H1 (cell line): ENCODE measurements at regions of chr1 and their contacts with region 1.

Region 1: DNA sequence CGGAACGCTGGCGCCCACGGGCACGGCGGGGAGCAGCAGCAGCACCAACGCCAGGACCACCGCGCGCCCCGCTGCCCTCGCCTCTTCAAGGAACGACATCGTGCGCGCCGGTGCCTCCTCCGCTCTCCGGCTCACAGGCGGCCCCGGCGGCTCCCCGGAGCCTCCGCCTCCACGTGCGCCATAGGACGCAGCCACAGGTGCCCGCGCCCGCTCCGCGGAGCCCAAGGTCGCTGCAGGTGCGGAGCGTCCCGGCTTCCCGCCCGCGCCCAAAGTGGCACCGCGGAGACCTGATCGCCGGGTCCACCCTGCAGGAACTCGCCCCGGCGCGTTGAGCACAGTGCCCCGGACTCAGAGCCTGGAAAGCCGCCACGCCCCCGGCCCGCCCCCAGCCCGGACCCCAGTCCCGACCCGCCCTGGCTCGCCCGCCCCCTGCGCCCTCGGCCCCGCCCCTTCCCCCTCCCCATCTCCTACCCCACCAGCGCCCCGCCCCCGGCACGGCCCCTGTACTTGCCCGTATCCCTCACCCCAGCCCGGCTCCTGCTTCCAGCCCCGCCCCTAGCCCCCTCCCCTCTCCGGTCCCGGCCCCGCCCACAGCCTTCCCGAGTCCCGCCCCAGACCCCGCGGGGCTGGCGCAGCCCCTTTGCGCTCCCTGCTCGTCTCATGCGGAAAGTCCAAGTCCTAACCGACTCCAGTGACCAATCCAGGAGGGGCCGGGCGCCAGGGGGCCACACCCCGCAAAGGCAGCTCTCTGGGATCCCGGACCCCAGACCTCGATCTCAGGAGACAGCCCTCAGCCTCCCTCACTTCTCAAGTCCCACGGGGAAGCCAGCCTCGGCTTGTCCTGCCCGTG is at the start of gene MEGF6:
- DNase-seq: peak; percentile 84 to 97
- H3K4me3 ChIP-seq: peak within 1 kb of the TSS; percentile 69 to 77 (median 72)
- H3K27ac ChIP-seq: no peak within 1 kb of the TSS
- H3K4me1 ChIP-seq: peaks cover 0 to 37% (median 22%) of the 10 kb centered on the region in 4 experiments; a peak in 6 of 7 replicates
- H3K27me3 ChIP-seq: peaks cover 3 to 16% (median 12%) of the 10 kb centered on the region in 4 experiments
- CTCF ChIP-seq: no peak
- EP300 ChIP-seq: no peak
- POLR2A ChIP-seq: no peak
- RAD21 ChIP-seq: no peak
- total RNA-seq, gene MEGF6: 13.2 and 14.8 TPM in 2 replicates

Region 2: DNA sequence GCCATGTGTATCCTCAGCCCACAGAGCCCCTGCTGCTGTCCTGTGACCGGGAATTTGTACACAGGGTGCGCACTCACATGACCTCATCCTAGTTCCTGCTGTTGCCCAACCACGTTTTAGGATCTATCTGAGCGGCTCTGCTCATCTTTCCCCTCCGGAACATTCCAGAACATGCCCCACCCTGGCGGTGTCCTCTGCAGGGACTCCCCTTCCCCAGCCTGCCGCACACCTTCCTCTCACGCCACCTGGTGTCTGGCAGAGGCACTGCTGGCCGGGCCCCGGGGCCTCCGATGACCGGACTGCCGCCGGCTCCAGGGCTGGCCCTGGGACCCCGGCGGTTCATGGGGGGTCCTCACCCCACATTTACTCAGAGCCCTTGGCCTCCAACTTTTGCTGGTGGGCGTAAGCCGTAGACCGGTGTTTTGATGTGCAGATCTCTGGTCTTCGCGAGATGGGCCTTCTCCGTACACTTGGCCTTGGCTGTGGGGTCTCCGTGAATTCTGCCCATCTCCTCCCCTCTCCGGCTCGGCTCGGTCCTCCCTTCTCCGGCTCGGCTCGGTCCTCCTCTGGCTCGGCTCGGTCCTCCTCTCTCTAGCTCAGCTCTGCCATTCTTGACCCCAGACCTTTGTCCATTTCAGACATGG is 127.5 kb before region 1 on chr1:
- CTCF ChIA-PET with region 1: interaction called, 12 read pairs
- POLR2A ChIA-PET with region 1: no interaction called
- DNase-seq: peak; percentile 44 to 97
- H3K4me3 ChIP-seq: no peak overlapping the region
- H3K27ac ChIP-seq: no peak overlapping the region
- H3K4me1 ChIP-seq: no peaks in the 10 kb centered on the region
- H3K27me3 ChIP-seq: no peaks in the 10 kb centered on the region
- CTCF ChIP-seq: peak in 2 of 3 experiments; percentile 81 to 95; a peak in 3 of 4 replicates
- EP300 ChIP-seq: no peak
- POLR2A ChIP-seq: no peak; a peak in 1 of 3 replicates
- RAD21 ChIP-seq: peak; percentile 70 to 81

Region 3: GRCh38 chr1:3530926-3531818 is 80.2 kb before region 1 on chr1:
- CTCF ChIA-PET with region 1: interaction called, 11 read pairs
- POLR2A ChIA-PET with region 1: no interaction called
- DNase-seq: peak; percentile 34 to 83
- H3K4me3 ChIP-seq: peak overlapping the region; percentile 45 to 78 (median 62)
- H3K27ac ChIP-seq: no peak overlapping the region; the same call in 1 of the 2 replicates
- H3K4me1 ChIP-seq: peaks cover 0 to 13% (median 8%) of the 10 kb centered on the region in 4 experiments; a peak in 6 of 7 replicates
- H3K27me3 ChIP-seq: peaks cover 0 to 33% (median 29%) of the 10 kb centered on the region in 4 experiments; a peak in 6 of 7 replicates
- CTCF ChIP-seq: no peak
- EP300 ChIP-seq: no peak
- POLR2A ChIP-seq: peak in 1 of 2 experiments; percentile 59; a peak in 2 of 3 replicates
- RAD21 ChIP-seq: no peak

Region 4: DNA sequence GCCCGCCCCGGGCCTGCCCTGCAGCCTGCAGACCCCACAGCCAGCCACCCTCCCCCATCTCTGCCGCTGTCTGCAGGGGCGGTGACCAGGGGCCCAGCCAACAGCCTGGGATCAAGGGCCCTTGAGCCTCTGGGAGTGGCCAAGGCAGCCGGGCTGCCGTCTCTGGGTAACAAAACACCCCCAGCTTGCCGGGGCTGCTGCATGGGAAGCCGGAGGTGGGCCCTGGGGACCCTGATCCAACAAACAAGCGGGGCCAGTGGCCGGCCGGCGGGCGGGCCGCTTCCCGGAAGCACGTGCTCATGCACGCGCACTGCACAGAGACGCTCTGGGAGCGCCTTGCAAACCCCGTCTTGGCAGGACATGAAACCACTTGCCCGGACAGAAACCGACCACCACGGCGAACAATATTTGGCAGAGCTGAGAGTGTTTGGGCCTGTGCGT is 13.3 kb before region 1 on chr1:
- CTCF ChIA-PET with region 1: interaction called, 84 read pairs
- POLR2A ChIA-PET with region 1: interaction called, 9 read pairs
- DNase-seq: no peak
- H3K4me3 ChIP-seq: no peak overlapping the region
- H3K27ac ChIP-seq: no peak overlapping the region
- H3K4me1 ChIP-seq: peaks cover 0 to 28% (median 20%) of the 10 kb centered on the region in 4 experiments; a peak in 6 of 7 replicates
- H3K27me3 ChIP-seq: no peaks in the 10 kb centered on the region
- CTCF ChIP-seq: no peak
- EP300 ChIP-seq: no peak
- POLR2A ChIP-seq: no peak
- RAD21 ChIP-seq: no peak

Region 5: DNA sequence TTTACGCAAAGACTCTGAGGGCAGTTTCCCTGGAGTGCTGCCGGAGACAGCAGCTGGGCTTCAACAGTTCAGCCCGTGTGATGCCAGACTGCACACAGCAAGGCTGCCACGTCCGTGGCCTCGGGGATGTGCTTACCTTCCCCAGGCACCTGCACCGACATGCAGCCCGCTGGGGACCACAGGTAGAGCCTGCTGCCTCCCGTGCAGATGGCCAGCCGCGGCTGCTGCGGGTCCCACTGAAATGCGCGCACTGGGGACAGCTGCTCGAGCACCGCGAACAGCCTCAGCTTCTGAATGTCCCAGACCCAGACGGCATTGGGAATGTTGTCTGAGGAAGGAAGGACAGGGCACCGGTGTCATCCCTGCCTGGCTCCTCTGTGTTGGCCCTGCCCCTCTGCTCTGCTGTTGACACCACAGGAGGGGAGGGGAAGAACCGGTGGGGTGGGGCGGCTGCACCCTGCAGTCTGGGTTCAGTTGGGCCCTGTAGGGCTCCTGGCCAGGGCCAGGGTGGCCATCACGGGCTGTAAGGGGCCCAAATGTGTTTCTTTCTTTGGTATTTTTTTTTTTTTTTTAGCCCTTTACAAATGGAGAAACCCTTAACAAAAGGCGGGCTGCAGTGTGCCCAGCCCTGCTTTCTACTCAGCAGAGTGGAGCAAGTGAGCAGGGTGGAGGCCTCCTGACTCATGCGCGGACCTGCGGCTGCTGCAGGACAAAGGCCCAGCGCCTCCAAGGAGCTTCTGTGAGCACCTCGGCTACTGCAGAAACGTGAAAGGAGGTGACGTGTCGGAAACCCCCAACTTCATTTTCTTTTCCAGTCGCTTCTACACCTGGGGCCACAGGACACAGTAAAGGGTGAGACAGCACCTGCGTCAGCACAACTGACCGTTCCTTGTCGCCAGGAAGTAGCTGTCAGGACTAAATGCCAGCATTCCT is 20.2 kb after region 1 on chr1:
- CTCF ChIA-PET with region 1: no interaction called
- POLR2A ChIA-PET with region 1: no interaction called
- DNase-seq: no peak
- H3K4me3 ChIP-seq: no peak overlapping the region
- H3K27ac ChIP-seq: no peak overlapping the region; the same call in 1 of the 2 replicates
- H3K4me1 ChIP-seq: peaks cover 0 to 10% (median 2%) of the 10 kb centered on the region in 4 experiments; a peak in 3 of 7 replicates
- H3K27me3 ChIP-seq: no peaks in the 10 kb centered on the region
- CTCF ChIP-seq: no peak
- EP300 ChIP-seq: no peak
- POLR2A ChIP-seq: no peak
- RAD21 ChIP-seq: no peak